AG04450 (cell line): ENCODE measurements at regions of chr10 and their contacts with region 1.

Region 1: GRCh38 chr10:96374985-96375830 is 16.4 kb upstream of the OPALIN start:
- DNase-seq: peak; percentile 46
- H3K4me3 ChIP-seq: peak overlapping the region; percentile 53
- H3K27ac ChIP-seq: no peak overlapping the region
- H3K27me3 ChIP-seq: peaks cover 12% of the 10 kb centered on the region
- CTCF ChIP-seq: peak; percentile 95

Region 2: DNA sequence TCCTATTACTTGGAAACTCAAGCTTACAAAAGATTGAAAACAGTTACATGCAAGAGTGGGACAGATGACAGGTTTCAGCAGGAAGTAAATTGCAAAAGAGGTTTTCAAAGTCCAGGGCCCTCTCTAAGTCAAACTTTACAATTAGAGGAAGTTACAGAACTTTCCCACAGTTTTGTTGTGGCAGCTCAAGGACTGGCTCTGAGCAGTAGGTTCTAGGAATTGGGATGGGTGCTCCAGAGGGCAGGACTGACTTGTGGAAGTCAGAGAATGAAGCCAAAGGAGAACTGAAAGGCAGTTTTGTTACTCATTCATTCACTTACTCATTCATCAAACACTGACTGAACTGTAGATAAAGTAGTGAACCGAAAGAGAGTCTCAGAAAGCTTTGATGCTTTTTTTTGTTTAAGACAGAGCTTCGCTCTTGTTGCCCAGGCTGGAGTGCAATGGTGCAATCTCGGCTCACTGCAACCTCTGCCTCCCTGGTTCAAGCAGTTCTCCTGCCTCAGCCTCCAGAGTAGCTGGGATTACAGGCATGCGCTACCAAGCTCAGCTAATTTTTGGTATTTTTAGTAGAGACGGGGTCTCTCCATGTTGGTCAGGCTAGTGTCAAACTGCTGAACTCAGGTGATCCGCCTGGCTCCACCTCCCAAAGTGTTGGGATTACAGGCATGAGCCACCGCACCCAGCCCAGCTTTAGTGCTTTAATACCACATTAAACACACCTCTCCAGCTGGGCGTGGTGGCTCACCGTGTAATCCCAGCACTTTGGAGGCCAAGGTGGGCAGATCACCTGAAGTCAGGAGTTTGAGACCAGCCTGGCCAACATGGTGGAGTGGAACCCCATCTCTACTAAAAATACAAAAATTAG is 398.6 kb before region 1 on chr10:
- CTCF ChIA-PET with region 1: interaction called, 12 read pairs
- POLR2A ChIA-PET with region 1: no interaction called
- DNase-seq: no peak
- H3K4me3 ChIP-seq: no peak overlapping the region
- H3K27ac ChIP-seq: no peak overlapping the region
- H3K27me3 ChIP-seq: no peaks in the 10 kb centered on the region
- CTCF ChIP-seq: no peak

Region 3: DNA sequence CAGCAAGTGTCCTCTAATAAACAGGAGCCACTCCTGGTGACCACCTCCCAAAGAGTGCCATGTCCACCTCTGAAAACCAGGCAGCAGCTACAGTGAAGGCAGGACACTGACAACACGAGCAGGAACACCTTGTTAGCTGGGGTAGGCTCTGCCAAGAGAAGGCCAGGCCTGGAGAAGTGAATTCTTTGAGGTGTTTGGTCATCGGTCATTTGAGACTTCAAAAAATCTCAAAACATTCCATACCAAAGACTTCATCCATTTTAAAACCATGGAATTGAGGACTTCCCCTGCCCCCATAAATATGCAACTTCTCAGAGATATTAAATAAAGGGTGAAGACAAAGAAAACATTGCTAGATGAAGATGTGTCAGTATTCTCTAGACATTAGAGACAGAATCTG is 12.0 kb after region 1 on chr10:
- CTCF ChIA-PET with region 1: interaction called, 11 read pairs
- POLR2A ChIA-PET with region 1: no interaction called
- DNase-seq: no peak
- H3K4me3 ChIP-seq: no peak overlapping the region
- H3K27ac ChIP-seq: no peak overlapping the region
- H3K27me3 ChIP-seq: peaks cover 6% of the 10 kb centered on the region
- CTCF ChIP-seq: no peak

Region 4: DNA sequence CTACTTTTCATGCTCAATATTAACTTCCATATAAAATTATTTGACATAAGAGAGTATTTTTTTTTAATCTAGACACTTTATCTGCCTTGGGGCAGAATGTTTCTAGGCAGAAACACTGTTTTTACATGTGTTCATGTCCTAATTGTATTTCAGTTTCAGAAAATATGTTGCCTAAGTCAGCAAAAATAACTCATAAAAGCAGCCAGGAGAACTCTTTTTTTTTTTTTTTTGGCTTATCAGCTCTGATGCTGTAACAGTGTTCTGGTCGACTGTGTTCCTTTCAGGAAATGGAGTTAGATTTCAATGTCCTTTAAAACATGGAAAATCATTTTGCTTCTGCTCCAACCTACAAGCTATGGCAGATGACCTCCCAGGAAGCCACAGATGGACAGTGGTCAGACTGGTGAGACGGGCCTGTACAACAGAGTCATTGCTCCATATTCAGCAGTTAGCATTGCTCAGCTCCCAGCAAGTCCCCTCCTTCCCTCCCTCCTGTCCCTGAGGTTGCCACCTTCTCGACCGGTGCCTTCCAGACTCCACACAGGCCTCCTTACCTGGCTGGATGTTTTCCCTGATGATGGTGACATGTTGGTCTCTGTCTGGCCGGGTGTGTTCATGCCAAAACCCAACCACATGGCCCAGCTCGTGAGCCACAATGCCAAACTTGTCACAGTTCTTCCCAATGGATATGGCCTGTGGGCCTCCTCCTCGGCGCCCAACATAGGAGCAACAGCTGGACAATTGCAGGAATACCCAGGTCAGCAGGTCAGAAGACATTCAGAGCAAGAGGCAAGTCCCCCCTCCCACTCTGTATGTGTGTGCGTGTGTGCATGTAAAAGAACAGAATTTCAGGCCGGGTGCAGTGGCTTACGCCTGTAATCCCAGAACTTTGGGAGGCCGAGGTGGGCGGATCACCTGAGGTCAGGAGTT is 47.1 kb after region 1 on chr10:
- CTCF ChIA-PET with region 1: interaction called, 14 read pairs
- POLR2A ChIA-PET with region 1: no interaction called
- DNase-seq: no peak
- H3K4me3 ChIP-seq: no peak overlapping the region
- H3K27ac ChIP-seq: no peak overlapping the region
- H3K27me3 ChIP-seq: peaks cover 5% of the 10 kb centered on the region
- CTCF ChIP-seq: no peak